Activated CD4-positive, alpha-beta T cell treated with anti-CD3 and anti-CD28 coated beads, Interleukin-2, amount 10 ng/mL, durations not matched to agents 24 days and 14 days (primary cell): ENCODE measurements at regions of chr1 and their contacts with region 1.

Region 1: DNA sequence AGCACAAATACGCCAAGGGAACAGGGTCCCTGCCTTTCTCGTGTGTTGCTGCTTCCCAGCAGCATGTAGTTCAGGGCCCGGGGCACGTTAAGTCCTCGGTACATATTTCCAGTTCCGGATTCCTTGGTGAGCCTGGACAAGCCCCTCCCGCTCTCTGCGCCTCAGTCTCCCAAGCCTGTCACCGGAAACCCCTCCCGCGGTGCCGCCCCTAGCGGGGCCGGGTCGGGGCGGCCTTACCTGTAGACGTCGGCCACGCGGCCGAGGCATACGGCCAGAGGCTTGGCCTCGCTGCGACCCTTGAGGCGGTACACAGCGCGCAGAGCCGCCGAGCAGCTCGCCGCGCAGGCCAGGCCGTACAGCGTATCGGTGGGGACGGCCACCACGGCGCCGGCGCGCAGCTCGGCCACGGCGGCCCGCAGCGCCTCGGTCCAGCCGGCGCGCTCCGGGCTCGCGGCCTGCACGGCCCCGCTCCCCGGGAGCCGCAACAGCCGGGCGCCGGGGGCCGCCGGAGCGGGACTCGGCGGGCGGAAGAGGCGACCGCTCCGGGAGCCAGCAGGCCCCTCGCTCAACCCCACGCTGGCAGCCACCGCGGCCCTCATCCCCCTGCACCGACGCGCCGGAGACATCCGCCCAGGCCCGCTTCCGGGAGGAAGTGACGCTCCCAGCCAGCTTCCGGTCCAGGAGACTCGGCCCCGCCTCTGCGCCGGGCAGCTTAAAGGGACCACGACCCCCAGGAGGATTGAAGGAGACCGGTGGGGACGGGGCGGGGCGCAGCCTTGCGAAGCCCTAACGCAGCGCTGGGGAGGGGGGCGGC is at the starts of genes C1orf122 and YRDC:
- DNase-seq: peak; percentile 98
- H3K4me3 Mint-ChIP-seq: peak within 1 kb of the TSS; percentile 98
- H3K27ac Mint-ChIP-seq: peak within 1 kb of the TSS; percentile 98
- H3K4me1 Mint-ChIP-seq: peaks cover 31% of the 10 kb centered on the region
- H3K27me3 Mint-ChIP-seq: no peaks in the 10 kb centered on the region
- total RNA-seq, gene C1orf122: 26.4 and 26.7 TPM in 2 replicates
- total RNA-seq, gene YRDC: 69.9 and 76.1 TPM in 2 replicates

Region 2: GRCh38 chr1:37795321-37796125 is 12.2 kb before region 1 on chr1:
- intact Hi-C with region 1: loop called (anchors 1 kb)
- DNase-seq: peak; percentile 90
- H3K4me3 Mint-ChIP-seq: peak overlapping the region; percentile 76
- H3K27ac Mint-ChIP-seq: no peak overlapping the region
- H3K4me1 Mint-ChIP-seq: peaks cover 14% of the 10 kb centered on the region
- H3K27me3 Mint-ChIP-seq: peaks cover 32% of the 10 kb centered on the region

Region 3: DNA sequence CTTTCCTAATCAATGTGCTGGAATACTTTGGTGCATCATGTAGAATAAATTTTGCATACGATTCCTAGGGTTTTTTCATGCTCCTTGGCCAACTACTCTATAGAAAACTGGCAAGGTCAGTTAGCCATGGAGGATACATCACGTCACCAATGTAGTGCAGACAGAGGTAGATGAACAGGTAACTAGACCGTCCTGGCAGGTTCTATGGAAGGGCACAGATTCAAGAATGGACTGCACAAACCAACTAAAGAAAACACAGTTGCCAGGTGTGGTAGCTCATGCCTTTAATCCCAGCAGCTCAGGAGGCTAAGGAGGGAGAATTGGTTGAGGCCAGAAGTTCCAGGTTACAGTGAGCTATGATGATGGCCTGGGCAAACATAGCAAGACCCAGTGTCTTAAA is 41.7 kb after region 1 on chr1:
- intact Hi-C with region 1: no loop called
- DNase-seq: no peak
- H3K4me3 Mint-ChIP-seq: no peak overlapping the region
- H3K27ac Mint-ChIP-seq: no peak overlapping the region
- H3K4me1 Mint-ChIP-seq: peaks cover 34% of the 10 kb centered on the region
- H3K27me3 Mint-ChIP-seq: no peaks in the 10 kb centered on the region

Region 4: DNA sequence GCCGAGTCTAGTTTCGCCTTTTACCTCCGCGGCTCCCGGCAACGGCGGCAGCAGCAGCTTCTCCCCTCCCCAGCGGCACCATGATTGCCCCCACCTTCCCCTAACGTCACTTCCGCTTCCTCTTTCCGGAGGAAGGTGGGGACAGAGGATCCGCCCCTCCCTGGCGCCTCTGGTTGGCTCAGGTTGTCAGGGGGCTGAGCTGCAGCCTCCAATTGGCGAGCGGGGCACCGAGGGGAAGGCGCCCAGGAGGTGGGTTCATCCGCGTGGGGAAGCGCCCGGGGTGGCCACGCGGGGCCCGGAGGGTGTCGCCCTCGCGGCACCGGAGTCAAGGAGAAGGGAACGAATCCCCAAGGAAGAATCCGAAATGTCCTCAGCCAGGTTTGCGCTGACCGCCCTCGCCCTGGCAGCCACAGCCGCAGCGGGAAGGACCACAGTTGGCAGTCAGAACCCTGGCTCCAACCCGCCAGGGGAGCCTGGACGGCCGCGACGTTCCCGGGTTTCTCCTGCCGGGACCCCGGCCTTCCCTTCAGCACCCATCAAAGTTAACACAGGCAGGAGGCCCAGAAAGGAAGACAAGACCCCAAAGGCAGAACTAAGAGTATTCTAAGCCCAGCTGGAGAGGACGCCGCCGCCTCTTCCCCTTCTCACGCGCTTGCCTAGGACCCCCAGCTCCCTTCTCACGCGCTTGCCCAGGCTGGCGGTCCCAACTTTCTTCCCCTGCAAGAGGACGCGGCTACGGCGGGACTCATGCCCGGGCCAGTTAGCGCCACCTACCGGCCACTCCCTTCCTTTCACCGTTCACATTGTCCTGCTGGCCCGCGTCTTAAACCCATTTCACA is 52.0 kb after region 1 on chr1 and contains the start of gene MTF1:
- intact Hi-C with region 1: loop called (anchors 1 kb)
- DNase-seq: peak; percentile 99
- H3K4me3 Mint-ChIP-seq: peak within 1 kb of the TSS; percentile 89
- H3K27ac Mint-ChIP-seq: peak within 1 kb of the TSS; percentile 96
- H3K4me1 Mint-ChIP-seq: peaks cover 28% of the 10 kb centered on the region
- H3K27me3 Mint-ChIP-seq: no peaks in the 10 kb centered on the region
- total RNA-seq, gene MTF1: 31.2 and 31.6 TPM in 2 replicates

Region 5: GRCh38 chr1:37931361-37932158 is 123.8 kb after region 1 on chr1:
- intact Hi-C with region 1: loop called (anchors 5 kb)
- DNase-seq: peak; percentile 99
- H3K4me3 Mint-ChIP-seq: peak overlapping the region; percentile 90
- H3K27ac Mint-ChIP-seq: peak overlapping the region; percentile 85
- H3K4me1 Mint-ChIP-seq: peaks cover 27% of the 10 kb centered on the region
- H3K27me3 Mint-ChIP-seq: no peaks in the 10 kb centered on the region

Region 6: DNA sequence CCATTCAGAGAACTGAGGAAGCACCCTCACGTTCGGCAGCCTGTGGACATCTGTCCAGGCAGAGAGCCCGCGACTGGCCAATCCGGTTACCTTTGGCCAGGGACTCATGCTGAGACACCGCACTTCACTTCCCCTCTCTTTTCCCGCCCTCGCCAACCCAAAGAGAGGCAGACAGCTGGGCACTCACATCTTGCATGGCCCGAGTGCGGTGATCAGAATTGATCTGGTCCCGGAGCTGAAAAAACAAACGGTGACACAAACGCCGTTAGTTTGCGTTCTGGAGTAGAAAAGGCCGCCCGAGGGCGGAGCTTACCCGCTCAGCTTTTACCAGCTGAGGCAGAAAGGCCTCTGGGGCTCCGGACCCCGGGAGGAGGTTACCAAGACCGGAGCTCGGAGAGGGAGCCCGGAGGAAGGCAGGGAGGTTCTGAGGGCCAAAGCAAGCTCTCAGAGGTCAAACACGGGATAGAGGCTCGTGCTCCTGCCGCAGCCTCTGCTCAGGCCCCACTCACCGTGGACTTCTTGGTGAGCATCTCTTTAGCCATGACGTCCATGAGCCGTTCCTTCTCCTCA is 181.7 kb after region 1 on chr1:
- intact Hi-C with region 1: loop called (anchors 1 kb)
- DNase-seq: peak; percentile 87
- H3K4me3 Mint-ChIP-seq: peak overlapping the region; percentile 96
- H3K27ac Mint-ChIP-seq: peak overlapping the region; percentile 93
- H3K4me1 Mint-ChIP-seq: peaks cover 19% of the 10 kb centered on the region
- H3K27me3 Mint-ChIP-seq: no peaks in the 10 kb centered on the region